PC-9 (cell line): ENCODE measurements at regions of chr10 and their contacts with region 1.

Region 1: GRCh38 chr10:65142641-65143435 is 1621.6 kb downstream of the REEP3 start:
- DNase-seq: peak; percentile 22 to 92
- H3K4me3 ChIP-seq: peak overlapping the region; percentile 17; the same call in 1 of the 2 replicates
- H3K27ac ChIP-seq: peak overlapping the region; percentile 69
- H3K4me1 ChIP-seq: peaks cover 31% of the 10 kb centered on the region
- H3K27me3 ChIP-seq: no peaks in the 10 kb centered on the region
- CTCF ChIP-seq: no peak

Region 2: GRCh38 chr10:64682043-64682442 is 460.8 kb before region 1 on chr10:
- CTCF ChIA-PET with region 1: no interaction called
- POLR2A ChIA-PET with region 1: no interaction called
- intact Hi-C with region 1: no loop called
- DNase-seq: peak in 1 of 2 experiments; percentile 1
- H3K4me3 ChIP-seq: no peak overlapping the region
- H3K27ac ChIP-seq: no peak overlapping the region
- H3K4me1 ChIP-seq: no peaks in the 10 kb centered on the region
- H3K27me3 ChIP-seq: no peaks in the 10 kb centered on the region
- CTCF ChIP-seq: no peak

Region 3: DNA sequence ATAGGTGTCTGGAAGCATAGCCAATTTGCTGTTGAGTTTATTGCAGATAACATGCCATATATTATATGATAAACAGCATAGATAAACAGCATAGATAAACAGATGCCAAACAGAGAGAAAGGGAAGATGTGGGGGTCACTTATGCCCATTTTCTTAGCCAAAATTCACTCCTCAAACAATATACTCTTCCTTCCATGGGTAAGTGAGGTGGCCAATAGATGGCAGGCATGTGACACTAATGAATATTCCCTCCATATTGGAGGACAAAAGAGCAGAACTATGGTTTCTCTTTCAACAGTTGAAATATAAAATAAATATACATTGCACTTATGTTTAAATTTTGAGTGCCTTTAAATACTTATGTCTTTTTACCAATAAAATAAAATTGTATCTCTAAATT is 408.9 kb before region 1 on chr10:
- CTCF ChIA-PET with region 1: no interaction called
- POLR2A ChIA-PET with region 1: no interaction called
- intact Hi-C with region 1: loop called (anchors 10 kb)
- DNase-seq: peak in 1 of 2 experiments; percentile 11
- H3K4me3 ChIP-seq: no peak overlapping the region
- H3K27ac ChIP-seq: no peak overlapping the region
- H3K4me1 ChIP-seq: no peaks in the 10 kb centered on the region
- H3K27me3 ChIP-seq: no peaks in the 10 kb centered on the region
- CTCF ChIP-seq: peak; percentile 70

Region 4: GRCh38 chr10:65090991-65091390 is 51.8 kb before region 1 on chr10:
- CTCF ChIA-PET with region 1: no interaction called
- POLR2A ChIA-PET with region 1: no interaction called
- intact Hi-C with region 1: no loop called
- DNase-seq: no peak
- H3K4me3 ChIP-seq: no peak overlapping the region
- H3K27ac ChIP-seq: no peak overlapping the region
- H3K4me1 ChIP-seq: no peaks in the 10 kb centered on the region
- H3K27me3 ChIP-seq: no peaks in the 10 kb centered on the region
- CTCF ChIP-seq: no peak

Region 5: DNA sequence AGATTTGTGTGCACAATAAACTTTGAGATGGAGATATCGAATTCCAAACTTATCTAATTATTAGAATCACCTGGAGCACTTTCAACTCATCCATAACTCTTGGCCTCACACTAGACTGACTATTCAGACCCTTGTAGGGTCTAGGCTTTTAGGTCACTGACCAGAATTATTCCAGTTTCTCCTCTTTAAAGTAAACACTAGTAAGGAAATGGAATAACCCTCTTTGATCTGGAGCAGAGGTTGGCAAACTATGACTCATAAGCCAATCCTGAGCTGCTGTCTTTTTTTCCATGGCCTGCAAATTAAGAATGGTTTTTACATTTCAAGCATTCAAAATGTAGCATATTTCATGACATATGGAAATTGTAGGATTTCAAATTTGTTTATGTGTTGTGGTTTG is 19.7 kb before region 1 on chr10:
- CTCF ChIA-PET with region 1: no interaction called
- POLR2A ChIA-PET with region 1: no interaction called
- intact Hi-C with region 1: loop called (anchors 1 kb)
- DNase-seq: peak in 1 of 2 experiments; percentile 71
- H3K4me3 ChIP-seq: no peak overlapping the region
- H3K27ac ChIP-seq: peak overlapping the region; percentile 27
- H3K4me1 ChIP-seq: peaks cover 22% of the 10 kb centered on the region
- H3K27me3 ChIP-seq: no peaks in the 10 kb centered on the region
- CTCF ChIP-seq: no peak

Region 6: DNA sequence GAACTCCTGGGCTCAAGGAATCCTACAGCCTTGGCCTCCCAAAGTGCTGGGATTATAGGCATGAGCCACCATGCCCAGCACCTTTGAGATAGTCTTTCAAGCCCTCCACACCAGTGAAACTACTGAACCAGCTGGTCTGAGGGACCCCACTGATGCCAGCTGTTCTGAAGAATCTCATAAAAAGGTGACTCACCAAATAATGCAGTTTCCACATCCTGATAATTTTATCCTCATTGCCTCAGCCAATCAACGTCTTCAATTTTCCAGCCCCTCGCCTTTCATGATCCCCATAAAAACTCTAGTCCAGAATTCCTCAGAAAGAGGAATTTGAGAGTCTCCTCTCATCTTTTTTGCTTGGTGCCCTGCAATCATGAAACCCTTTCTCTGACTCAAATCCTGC is 91.4 kb after region 1 on chr10:
- CTCF ChIA-PET with region 1: interaction called, 10 read pairs
- POLR2A ChIA-PET with region 1: no interaction called
- intact Hi-C with region 1: no loop called
- DNase-seq: no peak
- H3K4me3 ChIP-seq: no peak overlapping the region
- H3K27ac ChIP-seq: no peak overlapping the region
- H3K4me1 ChIP-seq: no peaks in the 10 kb centered on the region
- H3K27me3 ChIP-seq: no peaks in the 10 kb centered on the region
- CTCF ChIP-seq: no peak

Region 7: GRCh38 chr10:65570143-65571010 is 427.5 kb after region 1 on chr10:
- CTCF ChIA-PET with region 1: no interaction called
- POLR2A ChIA-PET with region 1: no interaction called
- intact Hi-C with region 1: loop called (anchors 2 kb)
- DNase-seq: peak; percentile 49 to 71
- H3K4me3 ChIP-seq: peak overlapping the region; percentile 79
- H3K27ac ChIP-seq: 0 out of 2 replicates have a peak overlapping the region, but pooled peaks have one; percentile 14
- H3K4me1 ChIP-seq: peaks cover 16% of the 10 kb centered on the region
- H3K27me3 ChIP-seq: no peaks in the 10 kb centered on the region
- CTCF ChIP-seq: no peak

Region 8: GRCh38 chr10:65940816-65941662 is 798.2 kb after region 1 on chr10:
- CTCF ChIA-PET with region 1: no interaction called
- POLR2A ChIA-PET with region 1: no interaction called
- intact Hi-C with region 1: no loop called
- DNase-seq: no peak
- H3K4me3 ChIP-seq: no peak overlapping the region
- H3K27ac ChIP-seq: no peak overlapping the region
- H3K4me1 ChIP-seq: no peaks in the 10 kb centered on the region
- H3K27me3 ChIP-seq: no peaks in the 10 kb centered on the region
- CTCF ChIP-seq: no peak